ENCODE measurements at regions of chr3 and their contacts with region 1.

Region 1: DNA sequence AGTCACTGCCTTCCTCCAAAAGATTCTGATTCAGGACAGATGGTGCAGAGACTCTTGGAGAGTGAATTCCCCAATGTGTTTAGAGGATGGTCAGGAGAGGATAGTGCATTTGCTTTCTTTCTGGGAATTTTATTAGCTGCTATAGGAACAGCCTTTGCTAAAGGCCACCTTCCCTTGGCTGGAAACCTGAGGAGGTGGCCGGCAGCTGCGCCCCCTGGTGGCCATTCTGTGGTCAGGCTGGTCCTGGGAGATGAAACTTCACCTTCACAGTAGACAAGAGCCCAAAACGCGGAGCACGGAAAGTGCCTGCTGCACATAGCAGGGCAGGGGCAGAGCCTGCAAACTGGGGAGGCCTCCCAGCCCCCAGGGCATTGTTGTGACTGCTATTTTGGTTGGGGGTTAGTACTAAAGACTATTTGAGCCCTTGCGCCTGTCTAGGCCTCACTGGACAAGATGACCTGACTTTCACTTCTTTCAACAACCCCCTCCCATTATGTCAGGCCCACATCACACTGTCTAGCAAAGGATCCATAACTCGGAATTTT is 34.3 kb downstream of the SEC22C start:
- DNase-seq: peak in 1 of 2 donors; percentile 77
- H3K4me3 ChIP-seq: no peak overlapping the region
- H3K27ac ChIP-seq: no peak overlapping the region
- H3K4me1 ChIP-seq: peaks cover 6 to 17% of the 10 kb centered on the region in 2 donors
- H3K27me3 ChIP-seq: no peaks in the 10 kb centered on the region
- CTCF ChIP-seq: peak; percentile 76 to 97 (median 93)

Region 2: DNA sequence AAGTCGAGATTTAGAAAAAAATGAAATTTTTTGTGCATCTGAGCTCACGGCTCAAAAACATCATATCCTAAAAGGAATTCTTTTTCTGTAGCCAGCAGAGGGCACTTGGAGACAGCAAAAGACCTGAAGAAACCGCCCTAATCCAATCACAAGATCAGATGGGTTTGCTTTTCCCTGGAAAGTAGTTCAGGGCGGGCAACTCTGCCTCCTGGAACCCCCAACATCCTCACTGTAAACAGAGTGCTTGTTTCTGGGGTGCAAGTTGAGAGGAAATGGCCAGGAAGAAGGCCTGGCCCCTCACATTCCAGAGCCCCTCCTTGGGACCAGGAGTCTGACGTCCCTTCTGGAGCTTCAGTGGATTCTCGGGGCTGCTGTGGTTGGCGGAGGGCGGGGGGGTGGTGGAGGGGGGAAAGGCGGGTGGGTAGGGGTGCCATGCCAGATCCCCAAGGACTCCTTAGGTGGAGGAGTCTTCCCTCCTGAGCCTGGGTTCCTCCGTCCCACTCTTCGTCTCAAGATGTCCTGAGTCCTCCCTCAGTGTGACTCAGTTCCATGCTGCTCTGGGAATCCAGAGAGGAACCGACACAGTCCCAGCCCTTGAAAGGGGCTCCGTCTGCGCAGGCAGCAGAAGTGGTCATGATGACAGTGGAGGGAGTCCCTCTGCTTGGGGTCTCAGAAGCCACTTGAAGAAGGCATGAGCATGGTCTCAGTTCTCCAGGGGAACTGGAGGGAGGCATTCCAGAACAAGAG is 317.4 kb before region 1 on chr3:
- intact Hi-C with region 1: loop called (anchors 5 kb)
- DNase-seq: no peak
- H3K4me3 ChIP-seq: peak overlapping the region; percentile 30 to 54
- H3K27ac ChIP-seq: no peak overlapping the region
- H3K4me1 ChIP-seq: peaks cover 0 to 7% of the 10 kb centered on the region in 2 donors
- H3K27me3 ChIP-seq: no peaks in the 10 kb centered on the region
- CTCF ChIP-seq: peak; percentile 44 to 63 (median 51)

Region 3: DNA sequence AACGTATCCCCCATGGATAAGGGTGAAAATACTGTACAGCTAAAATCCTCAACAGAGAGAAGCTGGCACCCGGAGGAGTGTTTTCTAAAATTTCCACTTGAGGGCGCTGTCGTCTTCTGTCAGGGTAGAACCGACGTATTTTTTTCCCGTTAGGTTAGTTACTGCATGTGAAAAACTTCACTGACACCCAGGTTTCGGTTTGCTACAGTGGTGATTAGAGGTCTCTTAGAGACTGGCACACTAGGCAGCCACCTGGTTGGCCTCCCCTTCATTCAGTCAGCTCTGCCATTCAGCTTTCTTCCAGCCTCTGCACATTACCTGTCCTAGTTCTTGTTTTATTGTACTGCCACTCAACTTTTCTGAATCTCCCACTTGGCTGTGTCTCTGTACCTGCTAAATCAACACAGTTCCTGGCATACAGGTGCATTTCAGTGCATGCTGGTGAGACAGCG is 299.9 kb before region 1 on chr3:
- intact Hi-C with region 1: loop called (anchors 5 kb)
- DNase-seq: no peak
- H3K4me3 ChIP-seq: no peak overlapping the region
- H3K27ac ChIP-seq: no peak overlapping the region
- H3K4me1 ChIP-seq: no peaks in the 10 kb centered on the region
- H3K27me3 ChIP-seq: no peaks in the 10 kb centered on the region
- CTCF ChIP-seq: peak; percentile 39 to 65 (median 49)

Region 4: GRCh38 chr3:42476225-42477125 is 71.0 kb before region 1 on chr3:
- intact Hi-C with region 1: no loop called
- DNase-seq: peak in 1 of 2 donors; percentile 42
- H3K4me3 ChIP-seq: no peak overlapping the region
- H3K27ac ChIP-seq: peak overlapping the region; percentile 26 to 60
- H3K4me1 ChIP-seq: peaks cover 0 to 8% of the 10 kb centered on the region in 2 donors
- H3K27me3 ChIP-seq: no peaks in the 10 kb centered on the region
- CTCF ChIP-seq: no peak

Region 5: GRCh38 chr3:42486814-42487565 is 60.5 kb before region 1 on chr3:
- intact Hi-C with region 1: no loop called
- DNase-seq: no peak
- H3K4me3 ChIP-seq: no peak overlapping the region
- H3K27ac ChIP-seq: no peak overlapping the region
- H3K4me1 ChIP-seq: peaks cover 4 to 8% of the 10 kb centered on the region in 2 donors
- H3K27me3 ChIP-seq: no peaks in the 10 kb centered on the region
- CTCF ChIP-seq: no peak

Region 6: DNA sequence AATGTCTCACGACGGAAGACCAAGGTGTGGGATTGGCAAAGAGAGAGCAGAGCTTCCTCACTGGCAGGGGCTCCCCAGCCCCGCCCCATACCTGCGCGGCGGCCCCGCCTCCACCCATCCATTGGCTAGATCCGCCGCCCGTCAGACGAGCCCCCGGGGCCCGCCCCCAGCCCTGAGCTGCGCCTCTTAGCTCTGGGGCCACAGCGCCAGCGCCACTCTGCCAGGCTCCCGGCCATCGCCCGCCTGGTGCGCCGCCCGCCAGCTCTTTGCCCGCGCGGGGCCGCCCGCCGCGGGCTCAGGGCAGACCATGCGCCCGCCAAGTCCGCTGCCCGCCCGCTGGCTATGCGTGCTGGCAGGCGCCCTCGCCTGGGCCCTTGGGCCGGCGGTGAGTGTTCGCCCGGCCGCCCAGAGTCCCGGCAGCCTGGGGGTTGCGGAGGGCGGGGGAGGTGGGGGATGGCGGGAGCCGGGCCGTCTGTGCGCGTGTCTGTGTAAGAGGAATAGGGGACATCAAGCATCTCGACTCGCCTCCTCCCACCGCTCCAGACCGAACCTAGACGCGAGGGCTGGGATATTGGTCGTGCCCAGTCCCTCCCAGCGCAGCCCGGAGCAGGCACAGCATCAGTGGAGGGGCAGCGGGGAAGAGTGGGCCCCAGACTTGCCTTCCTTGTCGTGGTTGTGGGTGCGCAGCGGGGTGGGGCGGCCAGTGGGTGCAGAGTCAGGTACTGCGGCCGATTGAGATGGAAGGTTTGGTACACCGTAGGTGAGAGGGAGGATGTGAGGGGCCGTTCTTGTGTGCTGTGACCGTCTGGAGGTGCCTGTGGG is 44.8 kb before region 1 on chr3 and contains the start of gene VIPR1:
- intact Hi-C with region 1: loop called (anchors 1 kb)
- DNase-seq: peak in 1 of 2 donors; percentile 81
- H3K4me3 ChIP-seq: peak within 1 kb of the TSS; percentile 66 to 67
- H3K27ac ChIP-seq: peak within 1 kb of the TSS in 1 of 2 donors; percentile 29
- H3K4me1 ChIP-seq: peaks cover 2 to 5% of the 10 kb centered on the region in 2 donors
- H3K27me3 ChIP-seq: no peaks in the 10 kb centered on the region
- CTCF ChIP-seq: no peak
- total RNA-seq, gene VIPR1: 3.5 TPM

Measured in ascending aorta (tissue), 2 donors.